GM13976 (cell line): ENCODE measurements at regions of chr7 and their contacts with region 1.

Region 1: GRCh38 chr7:20310963-20311742 is 19.5 kb upstream of the ITGB8 start:
- DNase-seq: no peak
- CTCF ChIP-seq: no peak

Region 2: GRCh38 chr7:19754521-19755116 is 556.5 kb before region 1 on chr7:
- in situ Hi-C with region 1: loop called (anchors 10 kb)
- DNase-seq: peak; percentile 16
- CTCF ChIP-seq: peak; percentile 60

Region 3: GRCh38 chr7:19982841-19983835 is 328.0 kb before region 1 on chr7:
- in situ Hi-C with region 1: loop called (anchors 10 kb)
- DNase-seq: no peak
- CTCF ChIP-seq: no peak